ENCODE measurements at regions of chr4 and their contacts with region 1.

Region 1: GRCh38 chr4:67133162-67133561 is 412.1 kb downstream of the CENPC start:
- DNase-seq: no peak
- ATAC-seq: no peak
- H3K4me3 ChIP-seq: no peak overlapping the region
- H3K4me3 Mint-ChIP-seq: no peak overlapping the region
- H3K27ac ChIP-seq: no peak overlapping the region
- H3K27ac Mint-ChIP-seq: no peak overlapping the region
- H3K4me1 ChIP-seq: no peaks in the 10 kb centered on the region
- H3K4me1 Mint-ChIP-seq: no peaks in the 10 kb centered on the region
- H3K27me3 ChIP-seq: no peaks in the 10 kb centered on the region
- H3K27me3 Mint-ChIP-seq: no peaks in the 10 kb centered on the region

Region 2: DNA sequence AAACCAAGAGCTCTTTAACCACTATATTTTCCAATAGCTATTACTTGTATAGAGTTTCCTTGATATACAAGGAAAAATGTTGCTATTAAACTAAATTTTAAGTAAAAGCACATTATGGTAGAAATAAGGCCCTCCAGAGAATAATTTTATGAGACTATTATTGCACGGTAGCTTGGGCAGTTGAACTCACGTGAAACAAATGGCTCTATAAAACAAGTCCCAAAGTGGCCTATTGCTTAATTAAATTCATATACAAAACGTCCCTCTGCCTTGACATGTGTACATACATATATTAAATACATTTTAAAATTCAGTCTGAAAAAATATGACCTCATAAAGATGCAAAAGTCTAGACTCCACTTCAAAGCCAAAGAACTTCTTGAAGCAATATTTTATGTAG is 170.1 kb before region 1 on chr4:
- CTCF ChIA-PET with region 1: no interaction called
- POLR2A ChIA-PET with region 1: no interaction called
- DNase-seq: no peak
- ATAC-seq: no peak
- H3K4me3 ChIP-seq: no peak overlapping the region
- H3K4me3 Mint-ChIP-seq: no peak overlapping the region
- H3K27ac ChIP-seq: no peak overlapping the region
- H3K27ac Mint-ChIP-seq: no peak overlapping the region
- H3K4me1 ChIP-seq: no peaks in the 10 kb centered on the region
- H3K4me1 Mint-ChIP-seq: no peaks in the 10 kb centered on the region
- H3K27me3 ChIP-seq: no peaks in the 10 kb centered on the region
- H3K27me3 Mint-ChIP-seq: no peaks in the 10 kb centered on the region

Region 3: GRCh38 chr4:67087897-67088296 is 45.3 kb before region 1 on chr4:
- CTCF ChIA-PET with region 1: no interaction called
- POLR2A ChIA-PET with region 1: no interaction called
- DNase-seq: peak in 14 of 35 experiments; percentile 0 to 37 (median 4)
- ATAC-seq: no peak
- H3K4me3 ChIP-seq: no peak overlapping the region
- H3K4me3 Mint-ChIP-seq: no peak overlapping the region
- H3K27ac ChIP-seq: no peak overlapping the region
- H3K27ac Mint-ChIP-seq: no peak overlapping the region
- H3K4me1 ChIP-seq: no peaks in the 10 kb centered on the region
- H3K4me1 Mint-ChIP-seq: no peaks in the 10 kb centered on the region
- H3K27me3 ChIP-seq: no peaks in the 10 kb centered on the region
- H3K27me3 Mint-ChIP-seq: no peaks in the 10 kb centered on the region

Region 4: DNA sequence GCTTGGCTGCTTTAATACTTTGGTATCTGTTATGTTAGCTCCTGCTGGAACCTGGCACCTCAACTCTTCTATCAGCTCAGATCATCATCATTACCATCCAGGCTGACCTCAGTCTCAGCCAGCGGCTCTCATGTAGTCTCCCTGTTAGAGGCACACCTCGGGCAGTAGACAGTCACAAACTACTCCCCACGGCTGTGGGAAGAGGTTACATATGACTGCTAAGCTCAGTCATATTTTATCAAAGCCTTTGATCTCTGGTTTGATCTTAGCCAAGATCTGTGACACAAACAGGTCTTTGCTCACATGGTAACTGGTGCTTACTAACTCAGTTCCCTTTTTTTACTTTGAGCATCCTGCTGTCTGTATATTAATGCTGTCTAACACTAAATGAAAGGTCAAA is 27.2 kb after region 1 on chr4:
- CTCF ChIA-PET with region 1: interaction called in 1 of 2 experiments, 12 read pairs
- POLR2A ChIA-PET with region 1: no interaction called
- DNase-seq: no peak
- ATAC-seq: no peak
- H3K4me3 ChIP-seq: no peak overlapping the region
- H3K4me3 Mint-ChIP-seq: no peak overlapping the region
- H3K27ac ChIP-seq: no peak overlapping the region
- H3K27ac Mint-ChIP-seq: no peak overlapping the region
- H3K4me1 ChIP-seq: no peaks in the 10 kb centered on the region
- H3K4me1 Mint-ChIP-seq: no peaks in the 10 kb centered on the region
- H3K27me3 ChIP-seq: no peaks in the 10 kb centered on the region
- H3K27me3 Mint-ChIP-seq: no peaks in the 10 kb centered on the region

Measured in T-cell (primary cell).